Activated naive CD4-positive, alpha-beta T cell treated with anti-CD3 and anti-CD28 coated beads, Interleukin-2, amount 10 ng/mL, durations not matched to agents 7 days and 5 days (primary cell): ENCODE measurements at regions of chr18 and their contacts with region 1.

Region 1: DNA sequence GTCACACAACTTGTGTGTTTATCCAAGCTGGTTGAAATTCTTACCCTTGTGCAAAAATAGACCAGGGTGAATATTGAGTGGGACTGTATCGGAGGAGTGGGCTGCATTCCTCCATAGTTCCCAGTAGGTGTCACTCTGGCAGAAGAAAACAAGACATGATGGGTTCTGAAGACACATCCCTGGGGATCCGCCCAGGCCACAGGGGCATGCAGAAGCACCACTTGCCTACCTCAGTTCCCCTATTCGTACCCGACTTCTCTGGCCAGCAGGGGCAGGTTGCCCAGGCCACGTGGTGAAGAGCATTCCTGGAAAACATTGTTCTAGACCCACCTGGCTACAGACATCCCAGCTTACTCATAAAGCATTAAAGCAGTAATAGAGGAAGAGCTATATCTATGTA is 168.2 kb downstream of the FAM210A start:
- DNase-seq: peak; percentile 44
- H3K4me3 Mint-ChIP-seq: no peak overlapping the region
- H3K27ac Mint-ChIP-seq: no peak overlapping the region
- H3K4me1 Mint-ChIP-seq: peaks cover 27% of the 10 kb centered on the region
- H3K27me3 Mint-ChIP-seq: no peaks in the 10 kb centered on the region

Region 2: GRCh38 chr18:13435596-13436327 is 122.4 kb before region 1 on chr18:
- CTCF ChIA-PET with region 1: no interaction called
- DNase-seq: no peak
- H3K4me3 Mint-ChIP-seq: no peak overlapping the region
- H3K27ac Mint-ChIP-seq: no peak overlapping the region
- H3K4me1 Mint-ChIP-seq: peaks cover 56% of the 10 kb centered on the region
- H3K27me3 Mint-ChIP-seq: no peaks in the 10 kb centered on the region

Region 3: GRCh38 chr18:13629841-13630715 is 72.0 kb after region 1 on chr18:
- CTCF ChIA-PET with region 1: interaction called, 67 read pairs
- DNase-seq: peak; percentile 68
- H3K4me3 Mint-ChIP-seq: no peak overlapping the region
- H3K27ac Mint-ChIP-seq: no peak overlapping the region
- H3K4me1 Mint-ChIP-seq: peaks cover 13% of the 10 kb centered on the region
- H3K27me3 Mint-ChIP-seq: no peaks in the 10 kb centered on the region